ENCODE measurements at regions of chr9 and their contacts with region 1.

Region 1: GRCh38 chr9:131237931-131238401 is 38.3 kb downstream of the FAM78A start:
- DNase-seq: peak; percentile 59 to 89 (median 84)
- ATAC-seq: peak; percentile 94
- H3K4me3 ChIP-seq: peak overlapping the region; percentile 18
- H3K4me3 Mint-ChIP-seq: peak overlapping the region; percentile 79 to 89 (median 82)
- H3K27ac ChIP-seq: peak overlapping the region; percentile 69
- H3K27ac Mint-ChIP-seq: peak overlapping the region; percentile 88 to 97 (median 96)
- H3K4me1 ChIP-seq: peaks cover 42 to 43% of the 10 kb centered on the region in 2 donors
- H3K4me1 Mint-ChIP-seq: peaks cover 29 to 61% (median 48%) of the 10 kb centered on the region in 7 donors
- H3K27me3 ChIP-seq: no peaks in the 10 kb centered on the region
- H3K27me3 Mint-ChIP-seq: no peaks in the 10 kb centered on the region

Region 2: GRCh38 chr9:131194762-131195161 is 43.2 kb before region 1 on chr9:
- CTCF ChIA-PET with region 1: interaction called, 3 read pairs
- POLR2A ChIA-PET with region 1: no interaction called
- intact Hi-C with region 1: loop called in 1 of 2 experiments (anchors 5 kb)
- DNase-seq: no peak
- ATAC-seq: no peak
- H3K4me3 ChIP-seq: no peak overlapping the region
- H3K4me3 Mint-ChIP-seq: no peak overlapping the region
- H3K27ac ChIP-seq: no peak overlapping the region
- H3K27ac Mint-ChIP-seq: peak overlapping the region in 2 of 9 donors; percentile 36 to 77
- H3K4me1 ChIP-seq: no peaks in the 10 kb centered on the region
- H3K4me1 Mint-ChIP-seq: peaks cover 0 to 10% (median 1%) of the 10 kb centered on the region in 7 donors
- H3K27me3 ChIP-seq: no peaks in the 10 kb centered on the region
- H3K27me3 Mint-ChIP-seq: no peaks in the 10 kb centered on the region

Region 3: GRCh38 chr9:131270171-131271015 is 32.4 kb after region 1 on chr9:
- CTCF ChIA-PET with region 1: interaction called, 3 read pairs
- POLR2A ChIA-PET with region 1: interaction called, 75 read pairs
- intact Hi-C with region 1: loop called (anchors 1 kb)
- DNase-seq: peak in 8 of 9 donors; percentile 49 to 70 (median 64)
- ATAC-seq: peak; percentile 16
- H3K4me3 ChIP-seq: peak overlapping the region; percentile 74
- H3K4me3 Mint-ChIP-seq: peak overlapping the region; percentile 83 to 100 (median 92)
- H3K27ac ChIP-seq: peak overlapping the region; percentile 96
- H3K27ac Mint-ChIP-seq: peak overlapping the region; percentile 95 to 100 (median 99)
- H3K4me1 ChIP-seq: peaks cover 50 to 63% of the 10 kb centered on the region in 2 donors
- H3K4me1 Mint-ChIP-seq: peaks cover 30 to 61% (median 50%) of the 10 kb centered on the region in 7 donors
- H3K27me3 ChIP-seq: no peaks in the 10 kb centered on the region
- H3K27me3 Mint-ChIP-seq: no peaks in the 10 kb centered on the region

Region 4: DNA sequence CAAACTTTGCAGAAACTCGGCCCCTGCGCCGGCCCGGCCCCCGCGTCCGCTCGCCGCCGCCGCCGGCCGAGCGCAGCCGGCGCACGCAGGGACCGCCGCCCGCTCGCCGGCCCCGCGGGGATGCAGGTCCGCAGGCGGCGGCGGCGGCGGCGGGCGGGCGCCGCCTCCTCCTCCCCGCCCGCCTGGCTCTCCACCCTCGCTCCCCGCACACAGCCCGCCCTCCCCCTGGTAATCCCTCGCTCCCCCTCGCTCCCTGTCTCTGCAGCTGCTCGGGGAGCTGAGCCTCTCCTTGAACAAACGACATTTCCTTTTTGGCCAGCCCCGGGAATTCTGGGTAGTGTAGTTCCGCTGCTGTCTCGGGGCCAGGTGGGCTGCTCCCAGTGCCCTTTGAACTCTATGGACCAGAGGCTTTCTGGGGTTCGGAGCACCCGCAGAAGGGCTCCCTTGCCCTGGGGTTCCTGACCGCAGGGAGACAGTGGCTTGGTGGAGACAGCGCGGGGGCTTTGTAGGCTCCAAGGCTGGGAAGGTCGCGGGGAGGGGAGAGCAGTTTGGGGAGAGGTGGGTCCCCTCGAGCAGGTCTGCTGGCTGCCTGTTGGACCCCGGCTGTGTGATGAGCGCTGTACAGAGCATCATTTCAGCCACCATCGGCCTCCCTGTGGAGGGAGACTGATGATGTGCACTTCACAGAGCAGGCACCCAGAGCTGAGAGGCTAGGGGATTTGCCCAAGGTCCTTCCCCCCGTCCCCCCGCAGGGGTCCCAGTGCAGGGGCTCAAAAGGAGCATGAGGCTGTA is 40.1 kb after region 1 on chr9:
- CTCF ChIA-PET with region 1: interaction called, 3 read pairs
- POLR2A ChIA-PET with region 1: interaction called, 50 read pairs
- intact Hi-C with region 1: loop called in 1 of 2 experiments (anchors 1 kb)
- DNase-seq: peak in 8 of 9 donors; percentile 47 to 77 (median 62)
- ATAC-seq: peak; percentile 67
- H3K4me3 ChIP-seq: peak overlapping the region; percentile 55
- H3K4me3 Mint-ChIP-seq: peak overlapping the region; percentile 83 to 97 (median 88)
- H3K27ac ChIP-seq: peak overlapping the region; percentile 96
- H3K27ac Mint-ChIP-seq: peak overlapping the region; percentile 84 to 95 (median 91)
- H3K4me1 ChIP-seq: peaks cover 21 to 23% of the 10 kb centered on the region in 2 donors
- H3K4me1 Mint-ChIP-seq: peaks cover 17 to 34% (median 27%) of the 10 kb centered on the region in 7 donors
- H3K27me3 ChIP-seq: no peaks in the 10 kb centered on the region
- H3K27me3 Mint-ChIP-seq: peaks cover 0 to 18% (median 0%) of the 10 kb centered on the region in 5 donors

Region 5: DNA sequence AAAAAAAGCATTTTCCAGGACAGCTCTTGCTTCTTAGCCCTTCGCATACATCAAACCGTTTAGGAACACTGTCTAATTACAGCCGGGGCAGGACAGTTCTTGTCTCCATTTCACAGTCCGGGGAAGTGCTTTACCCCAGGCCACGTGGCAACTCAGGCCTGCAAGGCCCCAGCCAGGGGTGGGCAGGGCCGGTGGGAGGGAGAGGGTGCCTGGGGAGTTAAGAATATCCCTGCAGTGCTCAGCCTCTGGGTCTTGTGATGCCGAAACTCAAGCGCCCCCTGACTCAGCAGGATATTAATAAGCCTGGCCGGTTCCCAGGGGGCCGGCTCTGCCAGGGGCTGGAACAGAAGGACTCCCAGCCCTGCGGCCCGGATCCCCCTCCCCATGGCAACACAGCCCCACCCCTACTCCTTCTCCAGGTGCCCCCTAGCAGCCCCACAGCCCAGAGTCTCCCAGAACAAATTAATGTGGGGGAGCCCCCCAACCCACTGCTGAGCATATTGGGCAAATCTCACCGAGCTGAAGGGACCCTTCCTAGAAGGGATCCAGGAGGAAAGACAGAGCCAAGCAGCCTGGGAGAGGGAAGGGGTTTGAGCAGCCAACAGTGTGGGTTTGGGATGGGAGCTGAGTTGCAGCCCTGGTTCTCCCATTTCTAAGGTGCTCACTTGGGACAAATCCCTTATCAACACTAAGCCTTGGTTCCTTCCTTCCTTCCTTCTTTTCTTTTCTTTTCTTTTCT is 96.8 kb after region 1 on chr9:
- CTCF ChIA-PET with region 1: interaction called, 3 read pairs
- POLR2A ChIA-PET with region 1: interaction called, 3 read pairs
- intact Hi-C with region 1: loop called in 1 of 2 experiments (anchors 2 kb)
- DNase-seq: no peak
- ATAC-seq: no peak
- H3K4me3 ChIP-seq: no peak overlapping the region
- H3K4me3 Mint-ChIP-seq: no peak overlapping the region
- H3K27ac ChIP-seq: no peak overlapping the region
- H3K27ac Mint-ChIP-seq: no peak overlapping the region
- H3K4me1 ChIP-seq: peaks cover 0 to 3% of the 10 kb centered on the region in 2 donors
- H3K4me1 Mint-ChIP-seq: peaks cover 4 to 7% (median 4%) of the 10 kb centered on the region in 7 donors
- H3K27me3 ChIP-seq: no peaks in the 10 kb centered on the region
- H3K27me3 Mint-ChIP-seq: peaks cover 0 to 5% (median 0%) of the 10 kb centered on the region in 5 donors

Measured in naive thymus-derived CD4-positive, alpha-beta T cell (primary cell).